ENCODE measurements at regions of chr12 and their contacts with region 1.

Region 1: DNA sequence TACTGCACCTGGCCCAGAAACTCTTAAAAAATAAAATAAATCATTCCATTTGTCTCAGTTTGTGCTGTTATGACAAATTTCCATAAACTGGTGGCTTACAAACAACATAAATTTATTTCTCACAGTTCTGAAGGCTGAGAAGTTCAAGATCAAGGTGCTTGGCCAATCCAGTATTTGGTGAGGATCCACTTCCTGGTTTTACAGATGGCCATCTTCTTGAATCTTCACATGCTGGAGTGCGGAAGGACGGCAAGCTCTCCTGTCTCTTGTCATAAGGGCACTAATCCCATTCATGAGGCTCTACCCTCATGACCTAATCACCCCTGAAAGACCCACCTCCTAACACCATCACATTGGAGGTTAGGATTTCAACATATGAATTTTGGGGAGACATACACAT is 29.9 kb upstream of the MYBPC1 start:
- DNase-seq: no peak
- ATAC-seq: no peak
- H3K4me3 ChIP-seq: no peak overlapping the region
- H3K27ac ChIP-seq: no peak overlapping the region
- H3K4me1 ChIP-seq: peaks cover 44% of the 10 kb centered on the region
- H3K27me3 ChIP-seq: no peaks in the 10 kb centered on the region
- CTCF ChIP-seq: no peak

Region 2: GRCh38 chr12:101501410-101501995 is 63.4 kb before region 1 on chr12:
- intact Hi-C with region 1: no loop called
- DNase-seq: no peak
- ATAC-seq: peak in 2 of 4 donors; percentile 54 to 74
- H3K4me3 ChIP-seq: no peak overlapping the region
- H3K27ac ChIP-seq: peak overlapping the region; percentile 47
- H3K4me1 ChIP-seq: peaks cover 13% of the 10 kb centered on the region
- H3K27me3 ChIP-seq: no peaks in the 10 kb centered on the region
- CTCF ChIP-seq: no peak

Region 3: DNA sequence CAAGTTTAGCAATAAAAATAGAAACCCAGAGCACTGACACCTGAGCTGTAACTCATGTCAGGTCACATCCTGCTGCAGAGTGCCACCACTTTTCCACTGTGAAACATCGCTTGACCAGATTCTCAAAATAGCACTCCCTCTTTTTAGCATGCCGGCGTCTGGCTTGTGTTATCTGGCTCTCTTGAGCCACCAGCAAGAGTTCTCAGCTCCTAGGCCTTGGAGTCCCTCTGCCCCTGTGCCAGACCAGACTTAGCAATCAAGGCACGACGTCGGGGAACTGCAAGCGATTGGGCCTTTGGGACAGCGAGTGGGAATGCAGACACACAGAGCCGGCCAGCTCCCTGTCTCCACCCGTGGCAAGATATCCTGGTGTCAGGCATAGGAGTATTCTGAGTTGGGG is 37.2 kb before region 1 on chr12:
- intact Hi-C with region 1: loop called (anchors 5 kb)
- DNase-seq: peak; percentile 19 to 78
- ATAC-seq: peak; percentile 88 to 94 (median 92)
- H3K4me3 ChIP-seq: peak overlapping the region; percentile 35
- H3K27ac ChIP-seq: peak overlapping the region; percentile 79
- H3K4me1 ChIP-seq: peaks cover 8% of the 10 kb centered on the region
- H3K27me3 ChIP-seq: no peaks in the 10 kb centered on the region
- CTCF ChIP-seq: no peak

Region 4: GRCh38 chr12:101604132-101604531 is 39.2 kb after region 1 on chr12:
- intact Hi-C with region 1: no loop called
- DNase-seq: no peak
- ATAC-seq: no peak
- H3K4me3 ChIP-seq: no peak overlapping the region
- H3K27ac ChIP-seq: peak overlapping the region; percentile 88
- H3K4me1 ChIP-seq: peaks cover 39% of the 10 kb centered on the region
- H3K27me3 ChIP-seq: no peaks in the 10 kb centered on the region
- CTCF ChIP-seq: no peak

Region 5: GRCh38 chr12:101616027-101616494 is 51.1 kb after region 1 on chr12:
- intact Hi-C with region 1: loop called (anchors 5 kb)
- DNase-seq: no peak
- ATAC-seq: peak in 1 of 4 donors; percentile 46
- H3K4me3 ChIP-seq: no peak overlapping the region
- H3K27ac ChIP-seq: peak overlapping the region; percentile 88
- H3K4me1 ChIP-seq: peaks cover 88% of the 10 kb centered on the region
- H3K27me3 ChIP-seq: no peaks in the 10 kb centered on the region
- CTCF ChIP-seq: no peak

Measured in psoas muscle (tissue), 8 donors.